Naive thymus-derived CD4-positive, alpha-beta T cell (primary cell): ENCODE measurements at regions of chr2 and their contacts with region 1.

Region 1: GRCh38 chr2:161238560-161239325 is 69.5 kb upstream of the PSMD14 start:
- DNase-seq: peak; percentile 35 to 70 (median 61)
- ATAC-seq: peak; percentile 80
- H3K4me3 ChIP-seq: peak overlapping the region; percentile 76
- H3K4me3 Mint-ChIP-seq: peak overlapping the region; percentile 83 to 98 (median 95)
- H3K27ac ChIP-seq: peak overlapping the region; percentile 27
- H3K27ac Mint-ChIP-seq: peak overlapping the region; percentile 57 to 90 (median 84)
- H3K4me1 ChIP-seq: peaks cover 17 to 26% of the 10 kb centered on the region in 2 donors
- H3K4me1 Mint-ChIP-seq: peaks cover 14 to 50% (median 43%) of the 10 kb centered on the region in 7 donors
- H3K27me3 ChIP-seq: no peaks in the 10 kb centered on the region
- H3K27me3 Mint-ChIP-seq: no peaks in the 10 kb centered on the region

Region 2: DNA sequence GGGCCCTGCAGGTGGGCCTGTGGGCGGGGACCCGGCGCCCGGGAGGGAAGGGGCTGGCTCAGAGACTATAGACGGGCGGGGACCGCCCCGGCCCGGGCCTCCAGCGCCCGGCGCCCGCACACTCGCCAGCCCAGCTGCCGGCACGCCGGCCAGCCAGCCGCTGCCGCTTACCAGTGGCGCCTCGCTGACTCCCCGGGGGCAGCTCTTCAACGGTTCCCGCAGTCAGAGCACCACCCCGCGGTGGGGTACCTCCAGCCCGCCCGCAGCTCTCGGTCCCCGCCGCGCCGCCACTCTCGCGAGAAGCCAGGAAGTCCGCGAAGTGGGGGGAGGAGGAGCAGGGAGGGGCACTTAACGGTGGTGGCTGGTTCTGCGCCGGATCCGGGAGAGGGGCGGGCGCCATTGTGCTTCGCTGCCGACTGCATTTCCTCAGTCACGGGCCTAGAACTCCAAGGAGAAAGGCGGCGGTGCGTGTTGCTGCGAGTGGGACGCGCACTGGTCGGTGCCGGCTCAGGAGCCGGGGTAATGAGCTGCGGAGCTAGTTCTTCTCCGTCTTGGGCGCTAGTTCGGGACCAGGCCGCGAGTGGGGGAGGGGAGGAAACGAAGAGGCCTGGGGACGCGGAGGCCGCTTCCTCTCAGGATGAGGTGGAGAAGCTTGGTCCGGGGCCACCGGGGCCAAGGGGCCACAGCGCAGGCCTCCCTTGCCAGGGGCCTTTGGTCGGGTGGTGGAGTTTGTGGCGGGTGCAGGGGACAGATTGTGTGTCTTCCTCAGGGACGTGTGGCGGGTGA is 1526.4 kb before region 1 on chr2 and contains the start of gene MARCHF7:
- CTCF ChIA-PET with region 1: no interaction called
- POLR2A ChIA-PET with region 1: no interaction called
- intact Hi-C with region 1: loop called in 1 of 2 experiments (anchors 5 kb)
- DNase-seq: peak; percentile 95 to 99 (median 98)
- ATAC-seq: peak; percentile 96
- H3K4me3 ChIP-seq: peak within 1 kb of the TSS; percentile 98
- H3K4me3 Mint-ChIP-seq: peak within 1 kb of the TSS; percentile 95 to 100 (median 100)
- H3K27ac ChIP-seq: peak within 1 kb of the TSS; percentile 90
- H3K27ac Mint-ChIP-seq: peak within 1 kb of the TSS; percentile 97 to 100 (median 99)
- H3K4me1 ChIP-seq: peaks cover 43 to 44% of the 10 kb centered on the region in 2 donors
- H3K4me1 Mint-ChIP-seq: peaks cover 36 to 63% (median 50%) of the 10 kb centered on the region in 7 donors
- H3K27me3 ChIP-seq: no peaks in the 10 kb centered on the region
- H3K27me3 Mint-ChIP-seq: no peaks in the 10 kb centered on the region
- total RNA-seq, gene MARCHF7: 64.3 to 120 (median 80.2) TPM

Region 3: GRCh38 chr2:160482673-160483072 is 756.1 kb before region 1 on chr2:
- CTCF ChIA-PET with region 1: no interaction called
- POLR2A ChIA-PET with region 1: no interaction called
- intact Hi-C with region 1: loop called (anchors 10 kb)
- DNase-seq: peak in 7 of 9 donors; percentile 58 to 87 (median 78)
- ATAC-seq: peak; percentile 97
- H3K4me3 ChIP-seq: no peak overlapping the region
- H3K4me3 Mint-ChIP-seq: peak overlapping the region; percentile 45 to 81 (median 72)
- H3K27ac ChIP-seq: peak overlapping the region; percentile 70
- H3K27ac Mint-ChIP-seq: peak overlapping the region; percentile 73 to 97 (median 95)
- H3K4me1 ChIP-seq: peaks cover 18 to 66% of the 10 kb centered on the region in 2 donors
- H3K4me1 Mint-ChIP-seq: peaks cover 33 to 100% (median 85%) of the 10 kb centered on the region in 7 donors
- H3K27me3 ChIP-seq: no peaks in the 10 kb centered on the region
- H3K27me3 Mint-ChIP-seq: no peaks in the 10 kb centered on the region

Region 4: GRCh38 chr2:161250864-161251436 is 12.2 kb after region 1 on chr2:
- CTCF ChIA-PET with region 1: interaction called, 5 read pairs
- POLR2A ChIA-PET with region 1: interaction called, 6 read pairs
- intact Hi-C with region 1: loop called in 1 of 2 experiments (anchors 1 kb)
- DNase-seq: peak in 2 of 9 donors; percentile 9 to 23
- ATAC-seq: peak; percentile 56
- H3K4me3 ChIP-seq: no peak overlapping the region
- H3K4me3 Mint-ChIP-seq: no peak overlapping the region
- H3K27ac ChIP-seq: no peak overlapping the region
- H3K27ac Mint-ChIP-seq: peak overlapping the region in 1 of 9 donors; percentile 19
- H3K4me1 ChIP-seq: peaks cover 0 to 4% of the 10 kb centered on the region in 2 donors
- H3K4me1 Mint-ChIP-seq: peaks cover 7 to 30% (median 17%) of the 10 kb centered on the region in 7 donors
- H3K27me3 ChIP-seq: no peaks in the 10 kb centered on the region
- H3K27me3 Mint-ChIP-seq: no peaks in the 10 kb centered on the region

Region 5: DNA sequence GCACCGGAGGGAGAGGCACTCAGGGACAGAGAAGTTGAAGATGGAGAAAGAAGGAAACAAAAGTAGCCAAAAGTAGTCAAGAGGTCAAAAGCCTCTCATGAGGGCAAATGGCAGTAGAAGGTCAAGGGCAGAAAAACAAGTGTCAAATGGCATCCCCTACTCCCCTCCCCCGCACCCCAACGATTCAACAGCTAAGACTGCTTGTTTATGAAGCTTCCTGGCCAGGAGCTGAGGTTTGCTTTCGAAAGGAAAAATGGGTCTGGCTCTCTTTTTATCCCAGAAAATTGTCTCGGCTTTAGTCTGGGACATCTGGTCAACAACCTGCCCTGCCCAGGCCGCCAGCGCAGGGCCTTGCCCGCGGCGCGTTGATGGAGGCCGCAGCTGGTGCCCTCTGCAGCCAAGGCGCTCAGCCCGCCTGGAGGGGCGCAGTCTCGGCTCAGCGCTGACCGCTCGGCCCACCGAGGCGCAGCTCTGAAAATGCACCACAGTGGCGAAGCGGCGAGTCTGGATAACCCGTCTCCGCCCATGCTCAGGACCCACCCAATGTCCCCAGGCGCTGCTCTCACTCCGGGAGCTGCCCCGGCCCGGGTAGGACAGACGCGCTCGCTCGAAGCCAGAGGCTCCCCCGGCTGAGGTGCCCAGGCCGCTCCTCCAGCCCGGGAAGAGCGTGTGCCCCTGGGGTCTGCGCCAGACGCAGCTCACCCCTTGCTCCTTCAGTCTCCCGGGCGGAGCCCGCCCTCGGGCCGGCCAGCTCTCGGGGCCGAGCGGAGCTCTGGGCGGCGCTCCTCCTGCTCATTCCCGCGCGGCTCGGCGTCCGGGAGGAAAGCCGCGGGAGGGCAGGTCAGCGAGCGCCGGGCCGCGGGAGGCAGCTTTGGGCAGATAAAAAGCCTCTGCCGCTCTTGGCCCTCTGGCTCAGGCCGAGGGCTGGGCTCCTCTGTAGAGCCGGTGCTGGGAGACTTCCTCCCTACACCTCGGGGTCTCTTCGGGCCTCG is 175.6 kb after region 1 on chr2:
- CTCF ChIA-PET with region 1: no interaction called
- POLR2A ChIA-PET with region 1: no interaction called
- intact Hi-C with region 1: loop called (anchors 5 to 10 kb)
- DNase-seq: peak in 1 of 9 donors; percentile 33
- ATAC-seq: peak; percentile 63
- H3K4me3 ChIP-seq: peak overlapping the region; percentile 43
- H3K4me3 Mint-ChIP-seq: peak overlapping the region; percentile 54 to 84 (median 74)
- H3K27ac ChIP-seq: no peak overlapping the region
- H3K27ac Mint-ChIP-seq: peak overlapping the region in 1 of 9 donors; percentile 32
- H3K4me1 ChIP-seq: peaks cover 23 to 31% of the 10 kb centered on the region in 2 donors
- H3K4me1 Mint-ChIP-seq: peaks cover 30 to 52% (median 50%) of the 10 kb centered on the region in 7 donors
- H3K27me3 ChIP-seq: peaks cover 7 to 38% of the 10 kb centered on the region in 2 donors
- H3K27me3 Mint-ChIP-seq: peaks cover 52 to 56% (median 53%) of the 10 kb centered on the region in 5 donors

Region 6: DNA sequence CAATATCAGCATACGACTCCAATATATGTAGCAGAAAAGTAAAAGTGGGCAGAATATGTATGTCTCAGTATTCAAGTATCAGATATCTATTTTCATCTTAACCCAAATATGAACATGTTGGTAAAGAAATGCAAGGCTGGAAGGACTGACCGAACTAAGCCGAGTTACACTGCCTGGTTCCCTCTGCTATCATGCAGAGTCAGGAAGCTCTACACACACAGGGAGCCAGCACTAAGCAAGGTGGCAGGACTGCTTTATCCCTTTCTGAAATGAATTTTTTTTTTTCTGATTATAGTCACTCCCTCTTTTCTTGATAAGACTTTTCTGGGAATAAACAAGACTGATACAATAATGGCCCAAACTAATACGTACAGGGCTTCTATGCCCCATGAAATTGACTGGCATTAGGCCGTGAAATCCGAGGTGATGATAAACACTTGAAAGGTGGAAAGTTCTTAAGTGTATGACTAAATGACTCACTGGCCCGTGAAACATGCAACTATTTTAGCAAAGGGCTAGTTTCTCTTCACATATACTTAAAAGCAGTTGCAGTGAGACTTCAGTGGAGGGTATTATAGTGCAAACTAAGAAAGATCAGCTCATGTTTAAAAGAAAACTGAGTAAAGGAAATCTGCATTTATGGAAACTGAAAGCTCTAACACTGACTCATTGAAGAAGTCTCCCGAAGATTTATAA is 820.4 kb after region 1 on chr2:
- CTCF ChIA-PET with region 1: no interaction called
- POLR2A ChIA-PET with region 1: no interaction called
- intact Hi-C with region 1: loop called in 1 of 2 experiments (anchors 5 kb)
- DNase-seq: no peak
- ATAC-seq: peak; percentile 33
- H3K4me3 ChIP-seq: peak overlapping the region; percentile 48
- H3K4me3 Mint-ChIP-seq: peak overlapping the region; percentile 64 to 83 (median 76)
- H3K27ac ChIP-seq: peak overlapping the region; percentile 39
- H3K27ac Mint-ChIP-seq: peak overlapping the region; percentile 45 to 91 (median 84)
- H3K4me1 ChIP-seq: peaks cover 35 to 42% of the 10 kb centered on the region in 2 donors
- H3K4me1 Mint-ChIP-seq: peaks cover 32 to 92% (median 88%) of the 10 kb centered on the region in 7 donors
- H3K27me3 ChIP-seq: no peaks in the 10 kb centered on the region
- H3K27me3 Mint-ChIP-seq: no peaks in the 10 kb centered on the region

Region 7: GRCh38 chr2:162343824-162344616 is 1105.3 kb after region 1 on chr2 and contains the start of gene GCA:
- CTCF ChIA-PET with region 1: no interaction called
- POLR2A ChIA-PET with region 1: no interaction called
- intact Hi-C with region 1: loop called in 1 of 2 experiments (anchors 5 kb)
- DNase-seq: peak; percentile 96 to 99 (median 98)
- ATAC-seq: peak; percentile 99
- H3K4me3 ChIP-seq: peak within 1 kb of the TSS; percentile 87
- H3K4me3 Mint-ChIP-seq: peak within 1 kb of the TSS; percentile 78 to 96 (median 91)
- H3K27ac ChIP-seq: peak within 1 kb of the TSS; percentile 53
- H3K27ac Mint-ChIP-seq: peak within 1 kb of the TSS; percentile 70 to 92 (median 81)
- H3K4me1 ChIP-seq: peaks cover 4 to 5% of the 10 kb centered on the region in 2 donors
- H3K4me1 Mint-ChIP-seq: peaks cover 0 to 21% (median 19%) of the 10 kb centered on the region in 7 donors
- H3K27me3 ChIP-seq: no peaks in the 10 kb centered on the region
- H3K27me3 Mint-ChIP-seq: peaks cover 0 to 9% (median 0%) of the 10 kb centered on the region in 5 donors
- total RNA-seq, gene GCA: 10.9 to 56.3 (median 13.4) TPM